GM12878 (cell line): ENCODE measurements at regions of chr22 and their contacts with region 1.

Region 1: DNA sequence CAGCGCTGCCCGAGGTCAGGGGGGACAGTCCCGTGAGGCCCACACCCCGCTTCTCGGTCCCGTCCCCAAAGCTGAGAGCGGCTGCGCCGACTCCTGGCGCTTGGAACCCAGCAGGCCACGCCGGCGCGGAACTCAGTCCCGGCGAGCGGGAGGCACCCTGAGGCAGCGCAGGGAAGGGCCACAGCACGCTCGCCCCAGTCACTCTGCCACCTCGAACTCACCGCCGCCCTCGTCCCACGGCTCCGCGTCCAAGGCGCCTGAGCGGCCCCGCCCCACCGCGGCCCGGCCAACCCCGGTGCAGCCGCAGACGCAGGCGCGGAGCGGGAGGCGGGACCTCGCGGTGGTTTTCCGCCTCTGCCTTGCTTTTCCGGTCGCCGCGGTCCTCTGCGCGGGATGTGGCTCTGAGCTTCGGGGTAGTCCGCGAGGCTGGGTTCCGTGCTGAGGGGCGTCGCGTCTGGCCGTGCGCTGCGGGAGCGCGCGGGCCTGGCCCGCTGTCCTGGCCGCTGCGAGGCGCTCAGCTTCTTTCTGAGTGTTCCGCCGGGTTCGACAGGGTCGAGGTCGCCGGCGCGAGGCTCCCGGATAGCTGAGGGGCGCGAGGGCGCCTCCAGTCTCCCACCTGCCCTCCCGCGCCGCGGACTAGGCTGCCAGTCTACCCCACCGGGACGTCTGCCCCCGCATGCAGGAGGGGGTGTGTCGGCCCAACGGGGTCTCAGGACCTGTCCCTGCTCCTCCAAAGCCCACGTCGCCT is at the start of gene CDPF1:
- DNase-seq: peak; percentile 55
- ATAC-seq: peak; percentile 97
- H3K4me3 ChIP-seq: peak within 1 kb of the TSS; percentile 77
- H3K27ac ChIP-seq: peak within 1 kb of the TSS; percentile 81
- H3K4me1 ChIP-seq: peaks cover 7% of the 10 kb centered on the region; the same call in 1 of the 2 replicates
- H3K27me3 ChIP-seq: no peaks in the 10 kb centered on the region
- CTCF ChIP-seq: no peak; a peak in 1 of 6 replicates
- EP300 ChIP-seq: no peak
- POLR2A ChIP-seq: peak; percentile 92
- RAD21 ChIP-seq: peak; percentile 2; the same call in 1 of the 2 replicates
- polyA plus RNA-seq, gene CDPF1: 1.0 to 2.2 TPM

Region 2: DNA sequence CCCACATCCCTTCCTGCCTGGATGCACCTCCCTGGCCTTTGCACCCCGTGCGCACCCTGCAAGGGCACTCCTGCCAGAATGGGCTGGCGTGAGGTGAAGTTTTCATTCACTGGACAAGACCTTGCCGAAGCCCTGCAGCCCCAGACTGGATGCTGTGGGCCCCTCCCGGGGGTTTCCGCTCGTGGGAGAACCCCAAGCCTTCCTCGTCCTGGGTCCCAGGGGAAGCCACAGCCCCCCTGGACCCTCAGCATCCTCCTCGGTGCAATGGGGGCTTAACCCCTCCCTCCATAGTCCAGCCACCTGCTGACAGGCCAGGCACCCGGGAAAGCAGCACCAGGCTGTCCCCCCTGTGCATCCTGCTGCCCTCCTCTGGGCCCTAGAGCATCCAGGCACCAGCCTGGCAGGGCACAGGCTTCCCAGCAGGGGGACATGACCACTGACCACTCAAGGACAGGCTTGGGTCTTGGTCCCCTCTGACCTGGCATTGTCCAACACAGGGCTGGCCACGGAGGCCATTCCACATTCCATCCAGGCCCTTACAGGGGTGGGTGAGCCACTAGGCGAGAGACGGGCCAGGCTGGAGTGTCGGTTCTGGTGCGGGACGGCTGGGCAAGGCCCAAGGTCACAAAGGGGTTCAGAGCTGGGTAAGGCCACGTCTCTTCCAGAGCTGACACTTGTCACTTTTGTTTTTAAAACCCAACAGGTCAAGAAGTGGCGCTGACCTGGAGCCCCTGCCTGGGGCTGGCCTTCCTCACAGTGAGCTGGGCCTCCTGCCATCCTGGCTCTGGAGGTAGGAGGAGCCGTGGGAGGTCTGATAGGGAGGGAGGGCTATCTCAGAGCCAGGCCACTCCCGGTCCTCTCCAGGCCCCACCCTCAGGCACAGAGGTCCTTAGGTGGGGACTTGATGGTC is 141.4 kb before region 1 on chr22:
- CTCF ChIA-PET with region 1: no interaction called
- POLR2A ChIA-PET with region 1: no interaction called
- RAD21 ChIA-PET with region 1: no interaction called
- SMC1A ChIA-PET with region 1: no interaction called
- in situ Hi-C with region 1: no loop called
- intact Hi-C with region 1: no loop called
- DNase-seq: no peak
- ATAC-seq: peak; percentile 43
- H3K4me3 ChIP-seq: no peak overlapping the region
- H3K27ac ChIP-seq: no peak overlapping the region
- H3K4me1 ChIP-seq: no peaks in the 10 kb centered on the region
- H3K27me3 ChIP-seq: no peaks in the 10 kb centered on the region
- CTCF ChIP-seq: no peak
- EP300 ChIP-seq: no peak
- POLR2A ChIP-seq: no peak
- RAD21 ChIP-seq: no peak

Region 3: DNA sequence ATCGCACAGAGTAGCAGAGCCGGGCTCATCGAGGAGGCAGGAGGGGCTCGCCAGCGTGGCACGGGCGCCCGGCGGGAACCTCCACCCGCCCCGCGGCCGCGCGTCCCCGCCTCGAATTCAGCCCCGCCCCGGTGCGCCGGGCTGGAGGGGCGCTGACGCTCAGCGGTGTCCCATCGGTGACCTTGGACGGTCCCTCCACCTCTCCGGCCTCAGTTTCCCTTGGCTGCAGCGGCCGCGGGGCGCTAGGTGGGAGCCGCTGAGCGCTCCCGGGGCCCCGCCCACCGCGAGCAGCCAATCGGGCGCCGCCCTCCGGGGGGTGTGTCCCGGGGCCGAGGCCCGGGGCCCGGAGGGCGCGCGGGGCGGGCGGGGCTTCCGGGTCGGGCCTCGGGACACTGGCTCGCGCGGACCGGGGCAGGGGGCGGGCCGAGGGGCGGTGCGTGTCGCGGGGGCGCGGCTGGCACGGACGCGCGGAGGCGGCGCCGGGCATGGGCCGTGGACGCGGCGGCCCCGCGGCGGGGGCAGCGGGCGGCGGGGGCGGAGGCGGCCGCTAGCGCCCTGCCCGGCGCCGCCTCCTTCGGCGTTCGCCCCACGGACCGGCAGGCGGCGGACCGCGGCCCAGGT is 100.1 kb before region 1 on chr22 and contains the start of gene PPARA:
- CTCF ChIA-PET with region 1: no interaction called
- POLR2A ChIA-PET with region 1: no interaction called
- RAD21 ChIA-PET with region 1: no interaction called
- SMC1A ChIA-PET with region 1: interaction called, 4 read pairs
- in situ Hi-C with region 1: no loop called
- intact Hi-C with region 1: loop called (anchors 5 kb)
- DNase-seq: no peak
- ATAC-seq: peak; percentile 84
- H3K4me3 ChIP-seq: peak within 1 kb of the TSS; percentile 81
- H3K27ac ChIP-seq: peak within 1 kb of the TSS; percentile 68
- H3K4me1 ChIP-seq: peaks cover 7% of the 10 kb centered on the region
- H3K27me3 ChIP-seq: peaks cover 9% of the 10 kb centered on the region in 2 experiments
- CTCF ChIP-seq: no peak
- EP300 ChIP-seq: no peak
- POLR2A ChIP-seq: no peak
- RAD21 ChIP-seq: no peak
- polyA plus RNA-seq, gene PPARA: 0.72 to 1.0 TPM

Region 4: DNA sequence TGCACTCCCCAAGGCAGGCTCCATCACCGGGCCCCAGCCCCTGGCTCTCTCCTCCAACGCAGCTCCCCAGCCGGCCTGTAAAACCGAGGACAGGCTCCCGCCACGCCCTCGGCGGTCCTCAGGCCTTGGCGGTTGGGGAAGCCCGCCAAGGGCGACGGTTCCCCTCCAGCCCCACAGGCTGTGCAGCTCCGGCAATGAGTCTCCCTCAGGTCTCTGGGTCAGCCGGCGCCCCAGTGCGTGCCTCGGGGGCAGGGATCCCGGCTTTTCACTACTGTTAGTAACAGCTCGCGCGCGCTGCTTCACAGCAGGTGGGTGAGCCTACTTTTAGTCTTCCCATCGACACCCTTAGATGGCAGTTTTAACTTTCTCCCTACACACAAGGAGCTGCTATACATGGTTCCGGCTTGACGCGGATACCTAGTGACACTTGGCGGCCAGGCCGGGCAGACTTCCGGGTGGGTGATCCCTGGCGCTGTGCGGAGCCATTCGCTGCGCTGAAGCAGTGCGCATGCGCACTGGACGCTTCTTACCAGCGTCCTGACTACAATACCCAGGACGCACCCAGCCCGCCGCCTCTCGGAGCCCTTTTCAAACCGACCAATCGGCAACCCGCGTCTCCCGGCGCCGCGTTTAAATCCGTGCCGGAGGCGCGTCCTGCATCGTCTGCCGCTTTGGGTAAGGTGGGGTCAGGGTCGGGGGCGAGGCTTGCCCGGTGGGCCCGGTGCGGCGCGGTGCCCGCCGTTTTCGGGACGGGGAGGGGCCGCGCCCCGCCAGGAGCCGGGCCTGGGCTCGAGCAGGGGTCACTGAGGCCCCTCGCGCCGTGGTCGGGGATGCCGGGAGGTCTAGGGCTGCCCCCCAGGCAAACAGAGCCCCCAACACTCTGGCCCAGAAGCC is 46.3 kb after region 1 on chr22 and contains the start of gene GTSE1:
- CTCF ChIA-PET with region 1: interaction called, 5 read pairs
- POLR2A ChIA-PET with region 1: interaction called, 9 read pairs
- RAD21 ChIA-PET with region 1: interaction called, 7 read pairs
- SMC1A ChIA-PET with region 1: no interaction called
- in situ Hi-C with region 1: no loop called
- intact Hi-C with region 1: loop called (anchors 5 kb)
- DNase-seq: peak; percentile 96
- ATAC-seq: peak; percentile 97
- H3K4me3 ChIP-seq: peak within 1 kb of the TSS; percentile 100
- H3K27ac ChIP-seq: peak within 1 kb of the TSS; percentile 95
- H3K4me1 ChIP-seq: peaks cover 32% of the 10 kb centered on the region
- H3K27me3 ChIP-seq: no peaks in the 10 kb centered on the region
- CTCF ChIP-seq: peak in 2 of 3 experiments; percentile 27 to 59; a peak in 3 of 6 replicates
- EP300 ChIP-seq: no peak
- POLR2A ChIP-seq: peak; percentile 93
- RAD21 ChIP-seq: peak; percentile 49
- polyA plus RNA-seq, gene GTSE1: 6.6 to 10.0 TPM

Region 5: DNA sequence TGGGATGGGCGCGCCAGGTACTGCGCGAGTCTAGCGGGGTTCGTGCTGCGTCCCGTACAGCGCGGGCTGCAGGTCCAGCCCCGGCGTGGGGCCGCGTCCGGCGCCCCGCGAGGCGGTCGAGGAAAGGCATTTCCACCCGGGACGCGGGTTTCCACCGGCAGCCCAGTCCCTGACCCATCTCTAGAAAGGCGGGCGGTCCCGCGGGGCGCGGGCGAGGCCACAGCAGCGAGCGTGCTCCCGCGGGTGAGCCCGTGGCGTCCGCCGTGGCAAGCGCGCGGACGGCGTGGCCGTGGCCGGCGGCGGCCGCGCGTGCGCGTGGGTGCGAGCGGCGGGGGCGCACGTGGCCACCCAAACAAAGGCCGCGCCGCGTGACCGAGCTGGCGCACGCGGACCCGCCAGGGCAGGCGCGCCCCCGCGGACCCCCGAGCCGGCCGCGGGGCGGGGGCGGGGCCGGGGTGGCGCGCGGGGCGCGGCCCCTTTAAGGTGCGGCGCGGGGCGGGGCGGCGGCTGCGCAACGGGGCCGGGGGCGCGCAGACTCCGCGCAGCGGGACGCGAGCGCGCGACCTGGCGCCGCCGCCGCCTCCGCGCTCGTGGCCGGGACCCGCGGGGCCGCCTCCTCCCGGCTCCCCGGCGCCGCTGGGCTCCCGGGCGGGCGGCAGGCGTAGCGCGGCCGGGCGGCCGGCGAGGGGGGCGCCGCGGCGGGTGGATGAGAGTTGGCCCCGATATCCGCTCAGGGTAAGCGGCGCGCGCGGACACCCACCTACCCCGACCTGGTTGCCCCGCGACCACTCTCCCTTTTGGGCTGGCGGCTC is 326.6 kb after region 1 on chr22:
- CTCF ChIA-PET with region 1: no interaction called
- POLR2A ChIA-PET with region 1: no interaction called
- RAD21 ChIA-PET with region 1: no interaction called
- SMC1A ChIA-PET with region 1: no interaction called
- in situ Hi-C with region 1: no loop called
- intact Hi-C with region 1: no loop called
- DNase-seq: no peak
- ATAC-seq: peak; percentile 9; the same call in 2 of the 3 replicates
- H3K4me3 ChIP-seq: no peak overlapping the region; the same call in 1 of the 2 replicates
- H3K27ac ChIP-seq: no peak overlapping the region
- H3K4me1 ChIP-seq: peaks cover 15% of the 10 kb centered on the region
- H3K27me3 ChIP-seq: no peaks in the 10 kb centered on the region; a peak in 1 of 4 replicates
- CTCF ChIP-seq: no peak
- EP300 ChIP-seq: no peak
- POLR2A ChIP-seq: 0 out of 2 replicates have a peak, but pooled peaks have one; percentile 37
- RAD21 ChIP-seq: no peak